ENCODE measurements at regions of chr2 and their contacts with region 1.

Region 1: DNA sequence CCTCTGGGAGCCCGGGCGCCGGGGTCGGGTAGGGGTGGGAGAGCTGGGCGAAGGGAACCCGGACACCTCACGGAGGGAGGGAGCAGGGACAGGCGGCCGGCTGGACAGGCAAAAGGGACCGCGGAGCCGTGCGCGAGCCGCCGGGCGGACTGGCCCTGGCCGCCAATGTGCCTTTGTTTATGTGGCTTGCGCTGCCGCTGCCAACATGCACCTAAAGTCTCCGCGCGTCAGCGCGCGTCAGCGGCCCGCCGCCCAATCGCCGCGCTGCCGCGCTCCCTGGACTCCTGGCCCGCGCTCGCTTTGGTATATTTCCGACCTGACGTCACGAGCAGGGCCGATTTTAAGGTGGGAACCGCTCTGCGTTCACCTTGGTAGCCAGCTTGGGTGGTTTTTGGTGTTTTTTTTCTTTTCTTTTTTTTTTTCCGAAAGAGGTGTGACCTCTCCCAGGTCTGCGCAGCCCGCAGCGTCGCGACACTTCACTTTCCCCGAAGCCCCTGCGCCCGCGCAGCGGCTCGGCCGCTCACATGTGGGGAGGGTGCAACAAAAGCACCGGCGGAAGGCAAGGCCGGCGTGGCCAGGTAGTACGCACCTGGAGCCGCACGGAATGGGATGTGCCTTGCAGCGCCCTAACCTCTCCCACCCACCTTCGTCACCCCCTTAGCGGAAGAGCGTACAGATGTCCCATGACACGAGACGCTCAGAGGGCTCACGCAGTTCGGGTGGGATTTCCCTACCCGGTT is at the start of gene NR4A2:
- DNase-seq: peak; percentile 91 to 93 (median 91)
- ATAC-seq: peak; percentile 62 to 81 (median 74)
- H3K4me3 ChIP-seq: peak within 1 kb of the TSS; percentile 44 to 87 (median 80)
- H3K27ac ChIP-seq: peak within 1 kb of the TSS; percentile 97 to 100 (median 99)
- H3K4me1 ChIP-seq: peaks cover 0 to 34% (median 7%) of the 10 kb centered on the region in 12 donors
- H3K27me3 ChIP-seq: peaks cover 0 to 29% (median 13%) of the 10 kb centered on the region in 9 donors
- CTCF ChIP-seq: no peak
- POLR2A ChIP-seq: peak; percentile 37 to 93
- total RNA-seq, gene NR4A2: 0.63 to 14.2 (median 1.1) TPM

Region 2: DNA sequence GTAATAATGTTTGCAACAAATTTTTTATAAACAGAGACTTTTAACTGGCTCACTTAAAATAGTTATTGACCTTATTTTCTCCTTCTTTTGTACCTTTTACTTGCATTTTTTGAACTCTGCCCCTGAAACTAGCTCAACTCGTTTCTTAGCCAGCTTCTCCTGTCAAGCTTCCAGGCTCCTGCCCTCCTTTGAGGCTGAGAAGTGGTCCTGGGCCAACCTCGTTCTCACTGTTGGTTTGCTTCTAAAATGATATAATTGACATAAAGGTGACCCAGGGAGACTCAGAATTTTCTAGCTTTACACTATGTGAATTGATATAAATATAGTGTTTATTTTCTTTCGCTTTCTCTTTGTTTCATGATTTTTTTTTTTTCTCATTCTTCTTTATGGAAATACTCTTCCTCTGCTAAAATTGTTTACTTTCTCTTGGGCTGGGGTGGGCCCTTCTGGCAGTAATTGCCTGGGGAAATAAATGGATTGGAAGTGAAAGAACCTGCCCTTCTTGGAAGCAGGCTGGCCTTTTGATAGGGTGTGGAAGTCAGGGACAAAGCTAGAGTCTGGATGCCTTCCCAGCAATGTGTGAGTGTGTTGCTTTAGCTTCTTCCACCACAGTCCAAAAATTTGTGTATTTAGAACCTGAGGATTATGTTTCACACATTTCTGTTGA is 134.2 kb after region 1 on chr2:
- intact Hi-C with region 1: loop called in 1 of 10 experiments (anchors 10 kb)
- DNase-seq: peak in 4 of 5 donors; percentile 52 to 75 (median 70)
- ATAC-seq: peak; percentile 92 to 95 (median 94)
- H3K4me3 ChIP-seq: peak overlapping the region in 9 of 12 donors; percentile 19 to 42 (median 29)
- H3K27ac ChIP-seq: peak overlapping the region in 11 of 12 donors; percentile 45 to 82 (median 63)
- H3K4me1 ChIP-seq: peaks cover 2 to 73% (median 37%) of the 10 kb centered on the region in 12 donors
- H3K27me3 ChIP-seq: no peaks in the 10 kb centered on the region
- CTCF ChIP-seq: no peak
- POLR2A ChIP-seq: no peak

Measured in heart left ventricle (tissue), 16 donors.